Adrenal gland (tissue), 19 donors: ENCODE measurements at regions of chr5 and their contacts with region 1.

Region 1: GRCh38 chr5:116137544-116138378 is 52.9 kb downstream of the COMMD10 start:
- DNase-seq: no peak
- H3K4me3 ChIP-seq: no peak overlapping the region
- H3K27ac ChIP-seq: no peak overlapping the region
- H3K4me1 ChIP-seq: peaks cover 0 to 4% of the 10 kb centered on the region in 2 donors
- H3K27me3 ChIP-seq: no peaks in the 10 kb centered on the region
- CTCF ChIP-seq: peak; percentile 74 to 91 (median 81)
- POLR2A ChIP-seq: no peak

Region 2: DNA sequence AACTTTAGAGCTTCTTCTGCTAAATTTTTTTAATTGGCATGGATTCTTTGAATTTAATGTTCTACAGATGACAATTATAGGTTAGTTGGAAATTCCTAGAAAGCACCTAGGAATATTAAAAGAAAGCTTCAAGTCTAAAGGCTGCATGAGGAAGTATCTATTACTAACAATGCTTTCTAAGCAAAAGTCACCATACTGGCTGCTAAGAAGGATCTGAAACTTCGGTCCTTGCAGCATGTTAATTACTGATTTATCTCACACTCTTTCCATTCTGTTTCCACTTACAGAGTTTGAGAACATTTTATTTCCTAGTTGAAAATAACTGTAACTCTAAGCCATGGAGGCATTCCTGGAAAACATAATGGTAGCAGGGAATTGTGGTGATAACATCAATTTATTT is 428.5 kb after region 1 on chr5:
- intact Hi-C with region 1: loop called in 1 of 2 experiments (anchors 10 kb)
- DNase-seq: no peak
- H3K4me3 ChIP-seq: no peak overlapping the region
- H3K27ac ChIP-seq: peak overlapping the region in 2 of 5 donors; percentile 32 to 63
- H3K4me1 ChIP-seq: peaks cover 31 to 77% of the 10 kb centered on the region in 2 donors
- H3K27me3 ChIP-seq: no peaks in the 10 kb centered on the region
- CTCF ChIP-seq: no peak
- POLR2A ChIP-seq: no peak

Region 3: GRCh38 chr5:116947691-116948528 is 810.1 kb after region 1 on chr5:
- intact Hi-C with region 1: loop called in 1 of 2 experiments (anchors 10 kb)
- DNase-seq: peak; percentile 58 to 83 (median 73)
- H3K4me3 ChIP-seq: no peak overlapping the region
- H3K27ac ChIP-seq: no peak overlapping the region
- H3K4me1 ChIP-seq: no peaks in the 10 kb centered on the region
- H3K27me3 ChIP-seq: no peaks in the 10 kb centered on the region
- CTCF ChIP-seq: peak; percentile 57 to 76 (median 65)
- POLR2A ChIP-seq: no peak